Activated CD8-positive, alpha-beta T cell treated with anti-CD3 and anti-CD28 coated beads for 36 hours (primary cell): ENCODE measurements at regions of chr1 and their contacts with region 1.

Region 1: GRCh38 chr1:93061895-93062792 is 16.9 kb upstream of the MTF2 start:
- DNase-seq: peak; percentile 71
- ATAC-seq: peak; percentile 91
- H3K4me3 Mint-ChIP-seq: no peak overlapping the region
- H3K27ac Mint-ChIP-seq: no peak overlapping the region
- H3K4me1 Mint-ChIP-seq: peaks cover 3% of the 10 kb centered on the region
- H3K27me3 Mint-ChIP-seq: peaks cover 4% of the 10 kb centered on the region
- CTCF ChIP-seq: peak; percentile 49

Region 2: DNA sequence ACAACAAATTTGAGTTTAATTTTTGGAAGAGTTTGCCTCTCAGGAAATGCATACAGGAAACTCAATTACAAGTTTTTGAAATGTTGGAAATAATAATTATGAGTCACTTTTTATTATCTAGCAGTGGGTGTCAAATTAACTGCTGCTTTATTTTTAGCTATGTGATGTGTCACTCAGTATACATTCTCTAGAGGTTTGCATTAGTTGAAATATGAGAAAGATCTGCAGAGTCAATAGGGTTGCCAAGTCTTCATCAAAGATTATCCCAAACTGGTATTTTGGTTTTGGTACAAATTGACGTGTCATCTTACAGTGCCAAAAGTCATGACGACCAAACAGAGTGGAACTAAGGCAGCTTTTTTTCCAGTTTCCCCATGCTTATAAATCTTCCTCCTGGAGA is 46.6 kb before region 1 on chr1:
- CTCF ChIA-PET with region 1: interaction called, 56 read pairs
- POLR2A ChIA-PET with region 1: interaction called, 3 read pairs
- intact Hi-C with region 1: no loop called
- DNase-seq: no peak
- ATAC-seq: no peak
- H3K4me3 Mint-ChIP-seq: no peak overlapping the region
- H3K27ac Mint-ChIP-seq: no peak overlapping the region
- H3K4me1 Mint-ChIP-seq: no peaks in the 10 kb centered on the region
- H3K27me3 Mint-ChIP-seq: peaks cover 2% of the 10 kb centered on the region
- CTCF ChIP-seq: no peak

Region 3: GRCh38 chr1:93021539-93022134 is 40.5 kb before region 1 on chr1:
- CTCF ChIA-PET with region 1: interaction called, 96 read pairs
- POLR2A ChIA-PET with region 1: interaction called, 3 read pairs
- intact Hi-C with region 1: loop called (anchors 1 kb)
- DNase-seq: no peak
- ATAC-seq: peak; percentile 95
- H3K4me3 Mint-ChIP-seq: no peak overlapping the region
- H3K27ac Mint-ChIP-seq: no peak overlapping the region
- H3K4me1 Mint-ChIP-seq: no peaks in the 10 kb centered on the region
- H3K27me3 Mint-ChIP-seq: peaks cover 3% of the 10 kb centered on the region
- CTCF ChIP-seq: peak; percentile 88

Region 4: GRCh38 chr1:93033785-93034184 is 28.4 kb before region 1 on chr1:
- CTCF ChIA-PET with region 1: interaction called, 14 read pairs
- POLR2A ChIA-PET with region 1: interaction called, 4 read pairs
- intact Hi-C with region 1: no loop called
- DNase-seq: no peak
- ATAC-seq: peak; percentile 66
- H3K4me3 Mint-ChIP-seq: no peak overlapping the region
- H3K27ac Mint-ChIP-seq: no peak overlapping the region
- H3K4me1 Mint-ChIP-seq: peaks cover 33% of the 10 kb centered on the region
- H3K27me3 Mint-ChIP-seq: no peaks in the 10 kb centered on the region
- CTCF ChIP-seq: no peak

Region 5: GRCh38 chr1:93042187-93043056 is 19.7 kb before region 1 on chr1:
- CTCF ChIA-PET with region 1: interaction called, 18 read pairs
- POLR2A ChIA-PET with region 1: interaction called, 3 read pairs
- intact Hi-C with region 1: no loop called
- DNase-seq: peak; percentile 45
- ATAC-seq: peak; percentile 97
- H3K4me3 Mint-ChIP-seq: peak overlapping the region; percentile 74
- H3K27ac Mint-ChIP-seq: peak overlapping the region; percentile 97
- H3K4me1 Mint-ChIP-seq: peaks cover 23% of the 10 kb centered on the region
- H3K27me3 Mint-ChIP-seq: no peaks in the 10 kb centered on the region
- CTCF ChIP-seq: no peak

Region 6: GRCh38 chr1:93078986-93079654 is 17.0 kb after region 1 on chr1 and contains the start of gene MTF2:
- CTCF ChIA-PET with region 1: interaction called, 10 read pairs
- POLR2A ChIA-PET with region 1: interaction called, 11 read pairs
- intact Hi-C with region 1: no loop called
- DNase-seq: peak; percentile 96
- ATAC-seq: peak; percentile 93
- H3K4me3 Mint-ChIP-seq: peak within 1 kb of the TSS; percentile 99
- H3K27ac Mint-ChIP-seq: peak within 1 kb of the TSS; percentile 97
- H3K4me1 Mint-ChIP-seq: peaks cover 34% of the 10 kb centered on the region
- H3K27me3 Mint-ChIP-seq: no peaks in the 10 kb centered on the region
- CTCF ChIP-seq: no peak
- total RNA-seq, gene MTF2: 65.0 to 70.9 TPM

Region 7: DNA sequence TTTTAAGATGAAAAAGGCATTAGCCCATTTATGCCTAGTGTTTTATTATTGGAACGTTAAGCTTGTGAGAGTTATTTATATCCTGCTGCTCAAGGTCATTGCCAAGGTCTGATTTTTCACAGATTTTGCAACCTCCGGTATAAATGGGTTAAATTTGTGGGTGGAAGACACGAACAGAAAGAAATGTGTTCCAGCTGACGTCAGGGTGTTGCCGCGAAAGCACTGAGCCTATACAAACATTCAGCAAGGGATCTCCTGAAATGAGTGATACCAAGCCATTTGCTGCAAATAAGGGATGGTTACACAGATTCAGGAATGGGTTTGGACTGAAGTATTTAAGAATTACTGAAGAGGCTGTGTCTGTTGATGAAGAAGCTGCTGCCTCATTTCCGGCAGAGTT is 85.9 kb after region 1 on chr1:
- CTCF ChIA-PET with region 1: no interaction called
- POLR2A ChIA-PET with region 1: no interaction called
- intact Hi-C with region 1: no loop called
- DNase-seq: no peak
- ATAC-seq: no peak
- H3K4me3 Mint-ChIP-seq: no peak overlapping the region
- H3K27ac Mint-ChIP-seq: peak overlapping the region; percentile 63
- H3K4me1 Mint-ChIP-seq: peaks cover 7% of the 10 kb centered on the region
- H3K27me3 Mint-ChIP-seq: no peaks in the 10 kb centered on the region
- CTCF ChIP-seq: no peak